Endothelial cell of umbilical vein (primary cell): ENCODE measurements at regions of chr6 and their contacts with region 1.

Region 1: DNA sequence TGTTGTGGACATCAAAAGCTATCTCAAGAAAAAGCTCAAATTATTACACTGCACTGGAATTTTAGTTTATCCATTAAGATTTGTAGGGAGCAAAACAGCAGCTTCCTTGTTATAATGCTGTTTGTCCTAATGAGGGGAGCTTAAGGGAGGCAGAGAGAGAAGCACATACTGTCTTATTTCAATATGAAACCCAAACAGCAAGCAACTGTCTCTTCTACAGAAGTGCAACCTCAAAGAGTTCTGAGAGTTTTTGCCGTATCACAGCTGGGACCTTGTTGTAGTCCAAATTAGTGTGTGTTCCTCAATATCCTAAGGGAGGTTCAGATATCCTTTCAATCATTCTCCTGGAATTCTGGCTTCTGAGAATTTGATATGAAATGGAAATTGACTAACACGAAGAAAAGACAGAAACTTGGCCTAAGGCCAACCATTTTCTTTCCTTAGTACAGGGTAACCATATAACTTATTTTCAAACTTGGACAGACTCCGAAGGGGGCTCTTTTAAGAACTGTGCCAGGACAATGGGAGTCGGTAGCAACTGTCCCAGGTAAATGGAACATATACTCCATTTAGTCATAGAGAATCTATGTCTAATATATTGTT is 149.3 kb upstream of the CCN2 start:
- DNase-seq: peak; percentile 50
- H3K4me3 ChIP-seq: no peak overlapping the region
- H3K27ac ChIP-seq: no peak overlapping the region
- H3K4me1 ChIP-seq: no peaks in the 10 kb centered on the region
- H3K27me3 ChIP-seq: no peaks in the 10 kb centered on the region
- CTCF ChIP-seq: no peak
- POLR2A ChIP-seq: no peak

Region 2: DNA sequence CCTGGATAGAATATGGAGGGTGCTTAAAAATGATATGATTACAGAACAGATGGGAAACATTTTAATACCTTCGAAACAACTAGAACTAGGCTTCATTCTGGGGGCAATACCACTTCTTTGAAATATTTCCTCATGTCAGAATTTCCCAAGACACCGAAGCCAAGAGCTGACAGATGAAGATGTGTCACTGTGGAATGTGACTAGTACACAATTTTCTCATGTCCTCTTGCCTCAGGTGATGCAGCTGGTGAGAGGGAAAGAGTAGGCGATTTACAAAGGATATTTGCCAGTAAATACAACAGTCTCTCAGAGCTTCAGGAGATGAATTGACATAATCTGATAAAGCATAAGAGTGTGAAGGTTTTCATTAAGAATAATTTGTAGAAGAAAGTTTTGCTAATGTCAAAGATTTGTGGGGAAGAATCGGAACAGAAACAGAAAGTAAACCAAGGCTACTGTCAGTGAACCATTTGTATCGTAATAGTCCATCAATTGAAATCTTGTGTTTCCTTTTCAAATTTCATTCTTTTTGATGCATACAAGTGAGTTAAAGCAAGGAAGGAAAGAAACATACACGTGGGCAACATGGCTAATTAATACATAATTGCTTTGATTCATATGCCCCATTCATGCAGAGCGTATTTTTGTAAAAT is 15.4 kb after region 1 on chr6:
- CTCF ChIA-PET with region 1: interaction called, 10 read pairs
- POLR2A ChIA-PET with region 1: no interaction called
- dilution Hi-C with region 1: no loop called
- intact Hi-C with region 1: no loop called
- DNase-seq: peak; percentile 54
- H3K4me3 ChIP-seq: peak overlapping the region in 2 of 3 experiments; percentile 45 to 61
- H3K27ac ChIP-seq: peak overlapping the region; percentile 4
- H3K4me1 ChIP-seq: peaks cover 12% of the 10 kb centered on the region
- H3K27me3 ChIP-seq: no peaks in the 10 kb centered on the region
- CTCF ChIP-seq: no peak
- POLR2A ChIP-seq: no peak